Tibial artery (tissue), 4 donors: ENCODE measurements at regions of chr22 and their contacts with region 1.

Region 1: GRCh38 chr22:25777870-25778269 is 35.9 kb downstream of the MYO18B start:
- DNase-seq: no peak
- H3K4me3 ChIP-seq: no peak overlapping the region
- H3K27ac ChIP-seq: no peak overlapping the region
- H3K4me1 ChIP-seq: no peaks in the 10 kb centered on the region
- H3K27me3 ChIP-seq: peaks cover 0 to 6% of the 10 kb centered on the region in 2 donors
- CTCF ChIP-seq: peak in 1 of 2 experiments; percentile 6

Region 2: DNA sequence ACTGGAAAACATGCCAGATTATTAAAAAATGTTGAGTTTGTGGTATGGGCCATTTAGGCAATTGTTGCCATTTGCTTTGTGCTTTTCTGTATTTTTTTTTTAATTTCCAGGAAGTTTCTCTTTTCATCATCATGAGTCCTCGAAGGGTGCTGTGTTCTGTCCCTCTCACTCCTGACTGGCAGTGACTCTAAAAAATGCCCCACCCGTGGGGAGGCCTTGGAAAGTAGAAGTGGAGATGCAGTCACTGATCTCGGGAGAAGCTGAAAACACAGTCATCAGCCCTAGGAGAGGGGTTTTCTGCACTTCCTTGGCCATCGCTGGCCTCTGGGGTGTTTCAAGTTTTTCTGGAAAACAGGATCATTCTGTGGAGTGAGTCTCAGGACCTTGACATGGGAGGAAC is 311.9 kb before region 1 on chr22:
- intact Hi-C with region 1: loop called (anchors 2 kb)
- DNase-seq: no peak
- H3K4me3 ChIP-seq: no peak overlapping the region
- H3K27ac ChIP-seq: no peak overlapping the region
- H3K4me1 ChIP-seq: no peaks in the 10 kb centered on the region
- H3K27me3 ChIP-seq: no peaks in the 10 kb centered on the region
- CTCF ChIP-seq: no peak

Region 3: DNA sequence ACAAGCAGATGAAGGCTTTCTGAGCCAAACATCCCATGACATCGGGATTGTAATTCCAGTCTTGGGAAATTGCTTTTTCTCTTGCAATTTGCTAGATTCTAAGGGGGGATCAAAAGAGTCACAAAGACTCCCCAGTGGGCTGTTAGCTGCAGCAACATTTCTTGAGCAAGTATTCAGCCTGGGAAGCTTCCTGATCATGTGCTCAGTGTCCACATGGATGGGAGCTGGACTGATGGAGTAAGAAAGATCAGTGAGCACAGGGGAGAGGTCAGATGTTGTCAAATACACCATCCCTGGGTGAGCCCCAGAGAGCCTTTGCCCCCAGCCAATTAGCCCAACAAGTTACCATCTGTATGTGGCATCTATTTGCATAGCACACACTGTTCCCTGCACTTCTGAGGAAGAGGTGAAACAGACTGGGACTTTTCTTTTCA is 223.6 kb before region 1 on chr22:
- intact Hi-C with region 1: loop called (anchors 10 kb)
- DNase-seq: no peak
- H3K4me3 ChIP-seq: no peak overlapping the region
- H3K27ac ChIP-seq: no peak overlapping the region
- H3K4me1 ChIP-seq: no peaks in the 10 kb centered on the region
- H3K27me3 ChIP-seq: no peaks in the 10 kb centered on the region
- CTCF ChIP-seq: no peak

Region 4: DNA sequence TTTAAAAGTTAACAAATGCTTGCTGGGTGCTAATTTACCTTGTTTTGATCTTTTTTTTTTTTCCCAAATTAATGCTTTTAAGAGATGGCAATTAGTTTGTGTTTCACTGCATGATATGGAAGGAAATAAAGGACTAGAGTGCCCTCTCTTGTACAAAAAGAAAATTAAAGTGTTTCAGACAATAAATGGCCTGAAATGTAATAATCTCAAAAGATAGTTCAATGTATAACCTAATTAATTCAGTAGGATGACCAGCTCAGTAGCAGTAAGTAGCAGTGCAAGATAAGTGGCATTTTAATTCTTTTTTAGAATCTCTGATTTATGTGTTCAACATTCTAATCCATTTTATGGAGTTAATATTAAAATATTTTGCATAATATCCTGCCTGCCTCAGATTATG is 75.8 kb before region 1 on chr22:
- intact Hi-C with region 1: loop called (anchors 10 kb)
- DNase-seq: no peak
- H3K4me3 ChIP-seq: no peak overlapping the region
- H3K27ac ChIP-seq: no peak overlapping the region
- H3K4me1 ChIP-seq: no peaks in the 10 kb centered on the region
- H3K27me3 ChIP-seq: no peaks in the 10 kb centered on the region
- CTCF ChIP-seq: peak; percentile 28 to 42

Region 5: DNA sequence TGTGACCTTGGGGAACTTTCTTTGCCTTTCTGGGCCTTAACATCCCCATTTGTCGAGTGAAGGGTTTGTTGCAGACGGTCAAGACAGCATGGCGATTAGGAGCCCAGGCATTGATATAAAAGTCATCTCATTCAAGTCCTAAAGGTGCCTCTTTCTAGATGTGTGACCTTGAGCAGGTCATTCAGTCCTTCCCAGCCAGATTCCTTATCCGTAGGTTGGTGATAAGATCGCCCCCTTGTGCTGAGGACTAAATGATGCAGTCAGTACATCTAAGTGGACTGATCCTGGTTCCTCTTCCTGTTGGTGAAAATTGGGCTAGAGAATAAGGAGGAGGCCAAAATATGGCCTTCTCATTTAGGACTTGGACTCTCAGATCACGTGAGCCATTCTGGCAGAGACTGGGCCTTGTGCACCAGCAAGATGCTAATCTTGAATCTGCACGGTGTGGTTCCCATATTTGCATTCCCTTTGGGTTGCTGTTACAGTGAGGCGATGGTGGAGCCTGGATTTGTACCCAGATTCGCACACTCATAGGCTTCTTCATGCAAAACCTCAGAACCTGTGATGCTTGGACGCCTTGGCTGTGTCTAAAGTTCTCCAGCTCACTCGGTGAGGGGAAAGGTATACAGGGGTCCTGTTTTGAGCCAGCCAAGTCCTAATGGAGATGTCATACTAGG is 121.0 kb after region 1 on chr22:
- intact Hi-C with region 1: no loop called
- DNase-seq: no peak
- H3K4me3 ChIP-seq: no peak overlapping the region
- H3K27ac ChIP-seq: no peak overlapping the region
- H3K4me1 ChIP-seq: no peaks in the 10 kb centered on the region
- H3K27me3 ChIP-seq: no peaks in the 10 kb centered on the region
- CTCF ChIP-seq: no peak